HCT116 (cell line): ENCODE measurements at regions of chr5 and their contacts with region 1.

Region 1: GRCh38 chr5:140107312-140108083 is 6.4 kb upstream of the PURA start:
- DNase-seq: peak; percentile 88
- ATAC-seq: peak; percentile 93
- H3K4me3 ChIP-seq: peak overlapping the region; percentile 87 to 94
- H3K27ac ChIP-seq: peak overlapping the region; percentile 89
- H3K4me1 ChIP-seq: peaks cover 10 to 33% of the 10 kb centered on the region in 2 experiments
- H3K27me3 ChIP-seq: no peaks in the 10 kb centered on the region
- CTCF ChIP-seq: no peak
- POLR2A ChIP-seq: peak; percentile 64
- RAD21 ChIP-seq: no peak

Region 2: GRCh38 chr5:140090251-140090650 is 17.2 kb before region 1 on chr5:
- CTCF ChIA-PET with region 1: no interaction called
- POLR2A ChIA-PET with region 1: no interaction called
- RAD21 ChIA-PET with region 1: no interaction called
- intact Hi-C with region 1: loop called (anchors 2 kb)
- DNase-seq: no peak
- ATAC-seq: no peak
- H3K4me3 ChIP-seq: no peak overlapping the region
- H3K27ac ChIP-seq: no peak overlapping the region
- H3K4me1 ChIP-seq: no peaks in the 10 kb centered on the region
- H3K27me3 ChIP-seq: no peaks in the 10 kb centered on the region
- CTCF ChIP-seq: no peak
- POLR2A ChIP-seq: no peak
- RAD21 ChIP-seq: no peak